ENCODE measurements at regions of chr18 and their contacts with region 1.

Region 1: DNA sequence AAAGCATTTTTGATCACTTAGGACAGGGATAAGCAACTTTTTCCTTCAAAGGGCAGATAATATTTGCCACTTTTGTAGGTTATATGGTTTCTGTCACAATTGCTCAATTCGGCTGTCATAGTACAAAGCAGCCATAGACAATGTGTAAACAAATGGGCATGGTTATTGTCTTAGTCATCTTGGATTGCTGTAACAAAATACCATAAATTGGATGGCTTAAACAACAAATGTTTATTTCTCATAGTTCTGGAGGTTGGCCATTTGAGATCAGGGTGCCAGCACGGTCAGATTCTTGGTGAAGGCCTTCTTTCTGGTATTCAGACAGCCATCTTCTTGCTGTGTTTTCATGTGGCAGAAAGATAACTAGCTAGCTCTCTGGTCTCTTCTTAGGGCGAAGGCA is 91.2 kb downstream of the TAF4B start:
- H3K4me3 ChIP-seq: no peak overlapping the region
- H3K27ac ChIP-seq: no peak overlapping the region
- H3K4me1 ChIP-seq: no peaks in the 10 kb centered on the region
- CTCF ChIP-seq: no peak

Region 2: GRCh38 chr18:26307189-26307773 is 10.1 kb before region 1 on chr18:
- CTCF ChIA-PET with region 1: interaction called, 14 read pairs
- POLR2A ChIA-PET with region 1: no interaction called
- H3K4me3 ChIP-seq: no peak overlapping the region
- H3K27ac ChIP-seq: no peak overlapping the region
- H3K4me1 ChIP-seq: no peaks in the 10 kb centered on the region
- CTCF ChIP-seq: no peak